GM12878 (cell line): ENCODE measurements at regions of chr11 and their contacts with region 1.

Region 1: GRCh38 chr11:73157053-73158010 is 15.2 kb upstream of the FCHSD2 start:
- DNase-seq: no peak
- ATAC-seq: peak; percentile 63
- H3K4me3 ChIP-seq: peak overlapping the region; percentile 69
- H3K27ac ChIP-seq: peak overlapping the region; percentile 98
- H3K4me1 ChIP-seq: peaks cover 71% of the 10 kb centered on the region
- H3K27me3 ChIP-seq: no peaks in the 10 kb centered on the region
- CTCF ChIP-seq: no peak
- EP300 ChIP-seq: peak in 1 of 2 experiments; percentile 59; a peak in 2 of 4 replicates
- POLR2A ChIP-seq: peak; percentile 67
- RAD21 ChIP-seq: no peak

Region 2: DNA sequence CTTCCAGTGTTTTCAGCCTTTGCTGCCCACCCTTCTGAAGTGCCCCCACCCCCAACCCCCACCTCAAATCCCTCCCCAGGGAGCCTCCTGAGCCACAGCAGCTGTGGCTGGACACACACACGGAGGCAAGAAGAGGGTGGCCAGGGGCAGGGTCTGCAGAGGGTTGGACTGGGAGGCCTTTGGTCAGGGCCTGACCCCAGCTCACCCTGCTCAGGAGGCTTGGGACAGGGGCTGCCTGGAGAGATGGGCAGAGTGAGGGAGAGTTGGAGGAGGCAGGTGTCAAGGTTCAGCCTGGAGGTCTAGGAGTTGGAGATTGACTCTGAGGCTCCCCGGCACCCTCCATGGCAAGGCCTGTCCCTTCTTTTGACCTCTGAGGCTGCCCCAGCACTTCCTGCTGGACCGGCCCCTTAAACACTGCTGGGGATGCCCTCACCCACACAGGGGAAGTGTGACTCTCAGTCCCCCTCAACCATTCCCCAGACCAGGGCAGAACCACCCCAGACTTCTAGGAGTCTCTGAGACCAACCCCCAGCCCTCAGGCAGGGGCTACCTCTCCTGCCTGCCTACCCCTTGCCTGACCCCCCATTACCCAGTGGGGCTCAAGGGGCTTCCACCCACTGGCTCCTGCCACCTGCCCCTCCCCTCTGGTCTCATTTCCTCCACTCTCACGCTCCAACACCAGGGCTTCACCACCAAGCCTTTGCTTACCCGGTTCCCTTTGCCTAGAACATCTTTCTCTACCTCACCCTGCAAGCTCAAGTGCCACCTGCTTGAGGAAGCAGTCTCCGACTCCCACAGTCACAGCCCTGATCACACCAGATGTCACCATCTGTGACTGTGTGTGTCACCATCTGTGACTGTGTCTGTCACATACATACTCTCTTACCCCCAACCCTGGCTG is 413.8 kb before region 1 on chr11:
- CTCF ChIA-PET with region 1: no interaction called
- POLR2A ChIA-PET with region 1: no interaction called
- RAD21 ChIA-PET with region 1: no interaction called
- SMC1A ChIA-PET with region 1: no interaction called
- in situ Hi-C with region 1: no loop called
- intact Hi-C with region 1: loop called (anchors 10 kb)
- DNase-seq: no peak
- ATAC-seq: peak; percentile 53
- H3K4me3 ChIP-seq: peak overlapping the region; percentile 51; the same call in 1 of the 2 replicates
- H3K27ac ChIP-seq: peak overlapping the region; percentile 59
- H3K4me1 ChIP-seq: peaks cover 75% of the 10 kb centered on the region
- H3K27me3 ChIP-seq: no peaks in the 10 kb centered on the region
- CTCF ChIP-seq: no peak
- EP300 ChIP-seq: no peak
- POLR2A ChIP-seq: no peak
- RAD21 ChIP-seq: no peak

Region 3: GRCh38 chr11:72969894-72970335 is 187.4 kb before region 1 on chr11:
- CTCF ChIA-PET with region 1: no interaction called
- POLR2A ChIA-PET with region 1: no interaction called
- RAD21 ChIA-PET with region 1: no interaction called
- SMC1A ChIA-PET with region 1: no interaction called
- in situ Hi-C with region 1: no loop called
- intact Hi-C with region 1: loop called (anchors 5 kb)
- DNase-seq: peak; percentile 82
- ATAC-seq: peak; percentile 95
- H3K4me3 ChIP-seq: 0 out of 2 replicates have a peak overlapping the region, but pooled peaks have one; percentile 1
- H3K27ac ChIP-seq: peak overlapping the region; percentile 81
- H3K4me1 ChIP-seq: peaks cover 28% of the 10 kb centered on the region
- H3K27me3 ChIP-seq: no peaks in the 10 kb centered on the region
- CTCF ChIP-seq: no peak
- EP300 ChIP-seq: peak; percentile 82
- POLR2A ChIP-seq: no peak
- RAD21 ChIP-seq: peak; percentile 2; the same call in 1 of the 2 replicates

Region 4: DNA sequence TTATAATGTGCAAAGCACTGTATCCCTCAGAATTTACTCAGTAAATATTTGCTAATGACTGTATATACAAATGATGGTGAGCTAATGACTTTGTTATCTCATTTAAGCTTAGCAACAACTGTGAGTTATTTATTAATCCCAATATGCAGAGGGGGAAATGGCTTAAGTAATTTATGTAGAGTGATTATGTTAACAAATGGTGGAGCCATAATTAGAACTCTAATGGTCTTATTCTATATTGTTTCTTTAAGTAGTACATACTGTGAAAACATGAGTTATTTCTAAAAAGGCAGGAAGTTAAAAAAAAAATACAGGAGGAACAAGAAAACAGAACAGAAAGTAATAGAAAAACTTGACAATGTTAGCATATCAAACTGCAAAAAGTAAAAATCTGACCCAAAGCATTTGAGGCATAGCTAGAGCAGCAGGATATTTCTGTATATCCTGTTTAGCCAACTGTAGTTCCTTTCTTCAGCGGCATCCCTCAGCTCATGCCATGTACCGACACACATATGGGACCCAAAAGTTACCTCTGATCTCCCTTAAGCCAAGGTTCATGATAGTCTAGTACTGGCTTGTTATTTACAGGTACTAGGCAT is 109.5 kb before region 1 on chr11:
- CTCF ChIA-PET with region 1: interaction called, 5 read pairs
- POLR2A ChIA-PET with region 1: interaction called, 10 read pairs
- RAD21 ChIA-PET with region 1: interaction called, 3 read pairs
- SMC1A ChIA-PET with region 1: interaction called, 6 read pairs
- in situ Hi-C with region 1: no loop called
- intact Hi-C with region 1: no loop called
- DNase-seq: peak; percentile 88
- ATAC-seq: peak; percentile 89
- H3K4me3 ChIP-seq: peak overlapping the region; percentile 40; the same call in 1 of the 2 replicates
- H3K27ac ChIP-seq: peak overlapping the region; percentile 95
- H3K4me1 ChIP-seq: peaks cover 44% of the 10 kb centered on the region
- H3K27me3 ChIP-seq: no peaks in the 10 kb centered on the region
- CTCF ChIP-seq: no peak
- EP300 ChIP-seq: peak; percentile 11 to 70; a peak in 1 of 4 replicates
- POLR2A ChIP-seq: 0 out of 2 replicates have a peak, but pooled peaks have one; percentile 29
- RAD21 ChIP-seq: 0 out of 2 replicates have a peak, but pooled peaks have one; percentile 7

Region 5: DNA sequence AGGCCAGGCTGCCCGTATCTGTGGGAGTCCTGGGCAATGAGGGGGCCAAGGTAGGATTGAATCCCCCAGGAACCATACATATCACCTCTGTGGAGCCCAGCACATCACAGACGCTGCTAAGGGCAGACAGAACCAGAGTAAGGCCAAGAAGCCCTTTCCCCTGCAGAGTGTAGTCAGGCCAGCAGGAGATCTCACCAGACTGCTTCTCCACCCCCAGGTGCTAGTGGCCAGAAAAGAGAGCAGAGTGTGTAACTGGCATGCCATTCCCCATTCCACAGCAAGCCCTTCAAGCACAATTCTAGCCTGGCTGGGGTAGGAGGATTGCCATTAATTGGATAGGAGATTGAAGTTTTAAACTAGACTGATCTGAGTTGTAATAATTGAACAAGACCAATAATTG is 12.8 kb after region 1 on chr11:
- CTCF ChIA-PET with region 1: interaction called, 86 read pairs
- POLR2A ChIA-PET with region 1: interaction called, 384 read pairs
- RAD21 ChIA-PET with region 1: interaction called, 441 read pairs
- SMC1A ChIA-PET with region 1: interaction called, 926 read pairs
- in situ Hi-C with region 1: no loop called
- intact Hi-C with region 1: no loop called
- DNase-seq: no peak
- ATAC-seq: peak; percentile 43
- H3K4me3 ChIP-seq: no peak overlapping the region
- H3K27ac ChIP-seq: no peak overlapping the region
- H3K4me1 ChIP-seq: peaks cover 35% of the 10 kb centered on the region
- H3K27me3 ChIP-seq: no peaks in the 10 kb centered on the region
- CTCF ChIP-seq: no peak
- EP300 ChIP-seq: no peak
- POLR2A ChIP-seq: no peak
- RAD21 ChIP-seq: no peak

Region 6: GRCh38 chr11:73325036-73325981 is 168.0 kb after region 1 on chr11:
- CTCF ChIA-PET with region 1: no interaction called
- POLR2A ChIA-PET with region 1: interaction called, 3 read pairs
- RAD21 ChIA-PET with region 1: interaction called, 3 read pairs
- SMC1A ChIA-PET with region 1: no interaction called
- in situ Hi-C with region 1: no loop called
- intact Hi-C with region 1: loop called (anchors 2 kb)
- DNase-seq: peak; percentile 83
- ATAC-seq: peak; percentile 83
- H3K4me3 ChIP-seq: peak overlapping the region; percentile 38; the same call in 1 of the 2 replicates
- H3K27ac ChIP-seq: peak overlapping the region; percentile 99
- H3K4me1 ChIP-seq: peaks cover 80% of the 10 kb centered on the region
- H3K27me3 ChIP-seq: no peaks in the 10 kb centered on the region
- CTCF ChIP-seq: no peak
- EP300 ChIP-seq: no peak; a peak in 2 of 4 replicates
- POLR2A ChIP-seq: peak; percentile 70
- RAD21 ChIP-seq: no peak